GM13977 (cell line): ENCODE measurements at regions of chr5 and their contacts with region 1.

Region 1: GRCh38 chr5:138449501-138450239 is 10.8 kb downstream of the REEP2 start:
- DNase-seq: peak; percentile 94
- CTCF ChIP-seq: peak; percentile 94

Region 2: DNA sequence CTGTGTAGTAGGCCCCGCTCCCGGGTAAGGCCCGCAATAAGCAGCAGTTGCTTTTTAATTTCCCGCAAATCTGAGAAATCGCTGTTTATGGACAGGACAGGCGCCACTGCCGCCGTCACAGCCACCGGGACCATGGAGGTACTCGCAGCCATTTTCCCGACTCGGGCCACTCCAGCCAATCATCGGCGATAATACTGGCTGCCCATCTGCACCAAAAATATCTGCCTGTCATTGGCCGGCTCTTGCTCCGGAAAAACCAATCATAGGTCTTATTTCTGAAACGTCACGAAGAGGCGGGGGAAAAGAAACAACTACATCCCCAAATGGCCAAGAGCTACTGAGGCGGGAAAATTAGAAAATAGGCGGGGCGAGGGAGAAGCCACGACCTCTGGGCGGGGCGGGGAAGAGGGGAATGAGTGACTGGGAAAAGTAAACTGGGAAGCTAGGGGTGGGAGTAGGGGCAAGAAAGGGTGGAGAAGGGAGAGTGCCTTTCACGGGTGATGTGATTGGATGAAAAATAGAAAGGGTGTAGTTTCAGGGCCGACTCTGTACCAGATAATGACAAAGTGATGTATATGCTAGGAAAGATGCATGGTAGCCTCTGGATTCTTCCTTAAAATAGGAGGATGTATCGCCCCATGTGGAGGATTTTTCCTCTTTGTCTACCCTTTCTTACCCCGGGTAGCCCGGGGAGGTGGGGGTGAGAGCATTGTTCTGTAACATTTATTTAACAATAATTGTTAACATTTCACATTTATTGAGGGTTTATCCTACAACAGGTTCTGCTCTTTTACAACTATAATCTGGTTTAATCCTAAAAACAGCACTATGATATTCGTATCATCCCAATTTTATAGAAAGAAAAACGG is 236.3 kb before region 1 on chr5 and contains the start of gene CDC23:
- in situ Hi-C with region 1: no loop called
- DNase-seq: peak; percentile 98
- CTCF ChIP-seq: no peak

Region 3: GRCh38 chr5:138503487-138504270 is 54.0 kb after region 1 on chr5:
- in situ Hi-C with region 1: loop called (anchors 10 kb)
- DNase-seq: peak; percentile 57
- CTCF ChIP-seq: peak; percentile 77